Activated naive CD4-positive, alpha-beta T cell treated with anti-CD3 and anti-CD28 coated beads, Interleukin-2, amount 10 ng/mL, durations not matched to agents 7 days and 5 days (primary cell): ENCODE measurements at regions of chr12 and their contacts with region 1.

Region 1: DNA sequence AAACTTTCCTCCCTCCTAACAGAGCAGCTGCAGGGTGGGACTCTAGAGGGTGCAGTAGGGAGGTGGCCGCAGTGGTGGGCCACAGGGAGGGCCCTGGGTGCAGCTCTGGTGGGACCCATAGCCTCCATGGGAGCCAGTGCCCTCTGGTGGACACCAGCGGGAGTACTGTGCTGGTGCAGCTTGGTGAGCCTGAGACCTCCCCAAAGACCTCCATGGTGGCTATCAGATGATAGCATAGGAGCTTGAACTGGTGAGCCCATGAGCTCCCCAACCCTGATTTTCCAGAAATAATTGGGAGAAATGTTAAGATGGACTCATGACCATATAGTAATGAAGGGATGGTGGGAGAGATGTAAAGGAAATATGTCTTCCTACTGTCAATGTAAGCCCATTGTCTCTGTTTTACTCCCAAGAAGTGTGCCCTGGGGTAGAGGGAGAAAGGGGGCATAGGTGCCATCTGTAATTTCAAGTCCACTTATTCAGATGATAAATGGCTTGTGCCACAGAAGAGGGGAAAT is 98.7 kb downstream of the GAS2L3 start:
- DNase-seq: peak; percentile 41
- H3K4me3 Mint-ChIP-seq: no peak overlapping the region
- H3K27ac Mint-ChIP-seq: no peak overlapping the region
- H3K4me1 Mint-ChIP-seq: peaks cover 3% of the 10 kb centered on the region
- H3K27me3 Mint-ChIP-seq: peaks cover 3% of the 10 kb centered on the region

Region 2: GRCh38 chr12:100682178-100682577 is 10.0 kb after region 1 on chr12:
- CTCF ChIA-PET with region 1: interaction called, 23 read pairs
- DNase-seq: no peak
- H3K4me3 Mint-ChIP-seq: no peak overlapping the region
- H3K27ac Mint-ChIP-seq: no peak overlapping the region
- H3K4me1 Mint-ChIP-seq: no peaks in the 10 kb centered on the region
- H3K27me3 Mint-ChIP-seq: no peaks in the 10 kb centered on the region

Region 3: DNA sequence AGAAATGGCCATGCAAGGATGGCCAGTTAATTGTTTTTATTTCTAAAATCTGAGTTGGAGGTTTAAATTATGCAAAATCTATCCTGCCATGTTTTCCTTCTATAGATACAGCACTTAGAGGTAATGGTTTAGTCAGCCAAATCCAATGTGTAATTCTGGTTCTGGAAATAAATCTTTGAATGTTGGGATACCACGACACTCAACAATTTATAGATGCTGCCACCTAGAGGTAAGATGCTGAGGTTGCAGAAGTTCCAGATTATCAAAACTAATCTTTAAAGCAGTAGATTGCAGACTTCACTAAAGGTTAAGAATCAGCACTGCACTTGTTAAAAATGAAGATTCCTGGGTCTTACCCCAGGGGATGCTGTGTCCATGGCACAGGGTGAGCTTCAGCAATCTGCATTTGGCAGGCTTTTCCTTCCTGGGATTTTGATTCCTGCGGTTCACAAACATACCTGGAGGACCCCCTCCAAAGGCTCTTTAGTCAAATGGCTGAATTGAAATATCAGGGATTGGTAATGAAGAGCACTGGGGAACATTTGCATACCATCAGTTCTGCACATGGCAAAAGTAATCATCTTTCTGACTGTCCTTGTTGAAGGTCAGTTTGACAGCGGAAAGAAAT is 69.1 kb after region 1 on chr12:
- CTCF ChIA-PET with region 1: interaction called, 16 read pairs
- DNase-seq: no peak
- H3K4me3 Mint-ChIP-seq: no peak overlapping the region
- H3K27ac Mint-ChIP-seq: no peak overlapping the region
- H3K4me1 Mint-ChIP-seq: no peaks in the 10 kb centered on the region
- H3K27me3 Mint-ChIP-seq: no peaks in the 10 kb centered on the region